CD8-positive, alpha-beta T cell (primary cell): ENCODE measurements at regions of chr5 and their contacts with region 1.

Region 1: GRCh38 chr5:119860463-119860862 is 231.1 kb downstream of the FAM170A start:
- DNase-seq: no peak
- ATAC-seq: no peak
- H3K4me3 ChIP-seq: no peak overlapping the region
- H3K4me3 Mint-ChIP-seq: no peak overlapping the region
- H3K27ac ChIP-seq: no peak overlapping the region
- H3K27ac Mint-ChIP-seq: no peak overlapping the region
- H3K4me1 ChIP-seq: no peaks in the 10 kb centered on the region
- H3K4me1 Mint-ChIP-seq: no peaks in the 10 kb centered on the region
- H3K27me3 ChIP-seq: no peaks in the 10 kb centered on the region
- H3K27me3 Mint-ChIP-seq: no peaks in the 10 kb centered on the region
- CTCF ChIP-seq: no peak

Region 2: DNA sequence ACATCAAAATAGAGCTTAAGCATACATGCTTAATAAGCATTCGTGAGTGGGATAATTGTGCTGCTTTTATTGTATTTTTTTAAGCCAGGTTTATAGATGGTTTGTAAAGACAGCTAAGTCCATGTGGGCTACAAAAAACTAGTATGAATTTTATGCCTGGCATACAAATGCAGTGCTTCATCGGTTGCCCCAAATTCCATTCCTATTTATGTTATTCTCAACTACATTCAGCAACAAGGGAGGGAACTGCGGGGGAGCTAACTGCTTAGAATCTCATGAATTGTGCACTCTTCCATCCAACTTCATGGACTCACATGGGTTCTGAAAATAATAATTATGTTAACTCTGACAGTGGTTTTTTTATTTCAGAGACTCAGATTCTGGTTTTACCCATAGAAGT is 31.9 kb before region 1 on chr5:
- CTCF ChIA-PET with region 1: no interaction called
- POLR2A ChIA-PET with region 1: no interaction called
- intact Hi-C with region 1: loop called in 1 of 2 experiments (anchors 1 kb)
- DNase-seq: no peak
- ATAC-seq: no peak
- H3K4me3 ChIP-seq: no peak overlapping the region
- H3K4me3 Mint-ChIP-seq: no peak overlapping the region
- H3K27ac ChIP-seq: no peak overlapping the region
- H3K27ac Mint-ChIP-seq: no peak overlapping the region
- H3K4me1 ChIP-seq: no peaks in the 10 kb centered on the region
- H3K4me1 Mint-ChIP-seq: no peaks in the 10 kb centered on the region
- H3K27me3 ChIP-seq: no peaks in the 10 kb centered on the region
- H3K27me3 Mint-ChIP-seq: no peaks in the 10 kb centered on the region
- CTCF ChIP-seq: no peak

Region 3: DNA sequence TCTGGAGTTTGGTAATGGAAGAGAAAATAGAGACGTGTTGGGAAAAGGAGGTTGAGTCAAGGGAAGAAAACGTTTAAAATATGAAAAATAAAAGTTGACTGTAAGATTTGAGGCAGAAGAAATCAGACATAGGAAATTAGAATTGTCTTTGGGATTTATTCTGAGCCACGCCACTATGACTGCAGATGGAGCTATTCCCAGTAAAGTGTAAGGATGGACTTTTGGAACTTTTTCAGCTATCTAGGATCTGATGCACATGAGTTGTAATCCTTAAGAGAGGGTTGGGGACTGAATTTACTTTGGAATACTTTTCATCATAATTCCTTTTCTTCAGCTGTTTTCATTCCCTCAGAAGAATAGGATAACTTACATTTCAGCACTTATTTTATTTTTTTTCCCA is 105.6 kb after region 1 on chr5:
- CTCF ChIA-PET with region 1: no interaction called
- POLR2A ChIA-PET with region 1: no interaction called
- intact Hi-C with region 1: no loop called
- DNase-seq: no peak
- ATAC-seq: no peak
- H3K4me3 ChIP-seq: no peak overlapping the region
- H3K4me3 Mint-ChIP-seq: no peak overlapping the region
- H3K27ac ChIP-seq: no peak overlapping the region
- H3K27ac Mint-ChIP-seq: no peak overlapping the region
- H3K4me1 ChIP-seq: no peaks in the 10 kb centered on the region
- H3K4me1 Mint-ChIP-seq: no peaks in the 10 kb centered on the region
- H3K27me3 ChIP-seq: no peaks in the 10 kb centered on the region
- H3K27me3 Mint-ChIP-seq: no peaks in the 10 kb centered on the region
- CTCF ChIP-seq: no peak